Panc1 (cell line): ENCODE measurements at regions of chr11 and their contacts with region 1.

Region 1: DNA sequence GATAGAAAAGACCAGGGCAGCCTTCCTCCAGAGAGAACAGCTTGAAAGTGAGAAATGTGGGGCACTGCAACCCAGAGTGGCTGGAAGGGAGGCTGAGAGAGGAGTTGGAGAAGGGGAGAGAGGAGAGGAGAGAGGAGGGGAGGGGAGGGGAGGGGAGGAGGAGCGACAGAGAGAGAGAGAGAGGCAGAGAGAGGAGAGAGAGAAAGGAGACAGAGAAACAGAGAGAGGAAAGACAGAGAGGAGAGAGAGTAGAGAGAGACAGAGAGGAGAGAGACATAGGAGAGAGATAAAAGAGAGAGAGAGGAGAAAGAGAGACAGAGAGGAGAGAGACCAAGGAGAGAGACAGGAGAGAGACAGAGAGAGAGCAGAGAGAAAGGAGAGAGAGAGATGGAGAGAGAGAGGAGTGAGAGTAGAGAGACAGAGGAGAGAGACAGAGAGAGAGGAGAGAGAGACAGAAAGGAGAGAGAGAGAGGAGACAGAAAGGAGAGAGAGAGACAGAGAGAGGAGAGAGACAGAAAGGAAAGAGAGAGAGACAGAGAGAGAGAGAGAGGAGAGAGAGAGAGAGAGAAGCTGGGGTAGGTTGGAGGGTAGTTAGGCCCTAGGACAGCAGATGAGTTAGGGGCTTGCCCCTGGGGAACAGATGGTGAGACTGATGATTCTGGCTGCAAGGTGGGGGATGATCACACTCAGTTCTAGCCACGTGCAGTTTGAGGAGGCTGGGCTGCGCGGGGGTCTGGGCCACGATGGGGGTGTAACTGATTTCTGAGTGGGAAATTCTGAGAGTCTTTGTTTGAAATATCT is 8.5 kb upstream of the SCYL1 start:
- DNase-seq: no peak
- ATAC-seq: peak; percentile 27; the same call in 1 of the 2 replicates
- H3K4me3 ChIP-seq: no peak overlapping the region
- H3K27ac ChIP-seq: peak overlapping the region; percentile 44; the same call in 1 of the 2 replicates
- H3K4me1 ChIP-seq: no peaks in the 10 kb centered on the region
- H3K27me3 ChIP-seq: no peaks in the 10 kb centered on the region
- CTCF ChIP-seq: no peak

Region 2: GRCh38 chr11:65427691-65428577 is 88.4 kb before region 1 on chr11:
- CTCF ChIA-PET with region 1: no interaction called
- POLR2A ChIA-PET with region 1: interaction called, 12 read pairs
- in situ Hi-C with region 1: no loop called
- intact Hi-C with region 1: no loop called
- DNase-seq: no peak
- ATAC-seq: peak; percentile 16
- H3K4me3 ChIP-seq: peak overlapping the region; percentile 91 to 99
- H3K27ac ChIP-seq: peak overlapping the region; percentile 100
- H3K4me1 ChIP-seq: peaks cover 56% of the 10 kb centered on the region
- H3K27me3 ChIP-seq: no peaks in the 10 kb centered on the region
- CTCF ChIP-seq: no peak

Region 3: DNA sequence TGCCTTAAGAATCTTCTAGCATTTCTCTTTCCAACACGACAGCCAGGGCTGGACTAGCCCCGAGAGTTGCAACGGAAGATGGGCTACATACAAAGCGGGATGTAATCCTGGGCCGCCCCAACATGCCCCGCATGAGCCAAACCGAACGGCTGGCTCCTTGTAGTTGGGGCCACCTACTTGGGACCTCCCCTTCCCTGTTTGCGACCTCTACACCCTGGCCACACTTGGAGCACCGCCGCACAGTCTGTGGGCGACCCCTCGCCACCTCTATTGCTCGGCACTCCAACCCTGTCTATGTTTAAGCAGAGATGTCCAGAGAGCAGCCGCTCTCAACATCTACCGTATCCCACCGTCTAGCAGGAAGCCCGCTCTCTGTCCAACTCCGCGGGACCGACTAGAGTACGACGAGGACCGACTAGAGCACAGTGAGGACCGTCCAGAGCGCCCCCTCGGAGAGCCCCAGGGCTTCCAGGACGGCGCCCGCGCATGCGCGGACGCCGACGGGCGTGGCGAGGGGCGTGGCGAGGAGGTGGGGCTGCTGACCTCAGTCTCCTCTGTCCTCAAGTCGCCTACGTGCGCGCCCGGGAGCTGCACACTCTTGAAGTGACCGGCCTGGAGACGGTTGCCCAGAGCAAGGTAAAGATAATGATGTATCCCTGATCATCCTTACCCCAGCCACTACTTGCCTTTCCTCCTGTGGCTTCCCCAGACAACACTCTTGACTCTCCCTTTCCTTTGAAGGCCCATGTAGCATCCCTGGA is 61.5 kb before region 1 on chr11:
- CTCF ChIA-PET with region 1: no interaction called
- POLR2A ChIA-PET with region 1: interaction called, 10 read pairs
- in situ Hi-C with region 1: no loop called
- intact Hi-C with region 1: no loop called
- DNase-seq: no peak
- ATAC-seq: peak; percentile 96
- H3K4me3 ChIP-seq: peak overlapping the region; percentile 54 to 90
- H3K27ac ChIP-seq: peak overlapping the region; percentile 92
- H3K4me1 ChIP-seq: peaks cover 26% of the 10 kb centered on the region
- H3K27me3 ChIP-seq: no peaks in the 10 kb centered on the region
- CTCF ChIP-seq: no peak